Naive thymus-derived CD4-positive, alpha-beta T cell (primary cell): ENCODE measurements at regions of chr18 and their contacts with region 1.

Region 1: DNA sequence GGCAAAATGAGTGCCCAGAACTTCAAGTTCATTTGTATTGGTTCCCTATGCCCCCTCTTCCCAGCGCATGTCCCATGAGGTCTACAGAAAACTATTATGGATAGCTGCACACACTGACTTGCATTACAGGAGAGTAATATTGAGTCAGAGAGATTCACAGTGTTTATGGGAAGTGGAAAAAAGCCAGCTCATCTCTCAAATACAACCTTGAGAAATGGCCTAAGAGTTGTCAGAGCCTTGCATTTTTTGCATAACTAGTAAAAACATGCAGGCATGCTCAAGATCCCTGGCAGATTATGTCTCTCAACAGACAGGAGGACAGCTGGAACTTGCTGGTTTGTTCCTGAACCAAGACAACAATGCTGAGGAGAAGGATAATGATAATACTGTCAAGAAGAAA is 1292.8 kb downstream of the DSC3 start:
- DNase-seq: no peak
- ATAC-seq: no peak
- H3K4me3 ChIP-seq: no peak overlapping the region
- H3K4me3 Mint-ChIP-seq: no peak overlapping the region
- H3K27ac ChIP-seq: no peak overlapping the region
- H3K27ac Mint-ChIP-seq: no peak overlapping the region
- H3K4me1 ChIP-seq: no peaks in the 10 kb centered on the region
- H3K4me1 Mint-ChIP-seq: no peaks in the 10 kb centered on the region
- H3K27me3 ChIP-seq: no peaks in the 10 kb centered on the region
- H3K27me3 Mint-ChIP-seq: no peaks in the 10 kb centered on the region

Region 2: DNA sequence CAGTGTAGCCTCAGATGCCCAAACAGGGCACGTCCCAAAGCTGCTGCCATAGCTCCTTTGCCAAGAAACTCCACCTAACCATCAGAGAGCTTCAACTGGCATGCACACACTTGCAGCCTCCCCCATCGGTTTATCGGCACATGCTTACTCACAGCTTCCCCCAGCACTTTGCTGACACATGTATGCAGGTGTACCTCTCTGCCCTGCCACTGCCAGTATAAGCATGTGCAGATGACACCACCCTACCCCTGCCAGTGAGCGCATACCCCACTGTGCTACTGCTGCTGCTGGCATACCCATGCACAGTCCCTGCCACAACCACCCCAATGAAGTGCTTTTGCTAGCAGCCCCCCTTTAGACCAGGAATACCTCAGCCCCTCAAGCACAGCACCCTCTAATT is 61.8 kb after region 1 on chr18:
- CTCF ChIA-PET with region 1: no interaction called
- POLR2A ChIA-PET with region 1: no interaction called
- intact Hi-C with region 1: loop called in 1 of 2 experiments (anchors 10 kb)
- DNase-seq: no peak
- ATAC-seq: no peak
- H3K4me3 ChIP-seq: no peak overlapping the region
- H3K4me3 Mint-ChIP-seq: no peak overlapping the region
- H3K27ac ChIP-seq: no peak overlapping the region
- H3K27ac Mint-ChIP-seq: no peak overlapping the region
- H3K4me1 ChIP-seq: no peaks in the 10 kb centered on the region
- H3K4me1 Mint-ChIP-seq: no peaks in the 10 kb centered on the region
- H3K27me3 ChIP-seq: no peaks in the 10 kb centered on the region
- H3K27me3 Mint-ChIP-seq: no peaks in the 10 kb centered on the region